Common myeloid progenitor, CD34-positive (primary cell): ENCODE measurements at regions of chr21 and their contacts with region 1.

Region 1: GRCh38 chr21:44792702-44793591 is 8.7 kb downstream of the UBE2G2 start:
- DNase-seq: peak; percentile 64 to 81 (median 80)
- H3K4me3 ChIP-seq: no peak overlapping the region
- H3K27ac ChIP-seq: peak overlapping the region in 1 of 2 experiments; percentile 18
- H3K4me1 ChIP-seq: peaks cover 0 to 9% (median 2%) of the 10 kb centered on the region in 4 experiments
- H3K27me3 ChIP-seq: no peaks in the 10 kb centered on the region

Region 2: GRCh38 chr21:44510508-44511210 is 282.3 kb before region 1 on chr21:
- CTCF ChIA-PET with region 1: interaction called, 36 read pairs
- POLR2A ChIA-PET with region 1: no interaction called
- DNase-seq: peak; percentile 62 to 74 (median 73)
- H3K4me3 ChIP-seq: peak overlapping the region in 6 of 7 experiments; percentile 10 to 79 (median 55)
- H3K27ac ChIP-seq: no peak overlapping the region
- H3K4me1 ChIP-seq: peaks cover 0 to 15% (median 8%) of the 10 kb centered on the region in 4 experiments
- H3K27me3 ChIP-seq: no peaks in the 10 kb centered on the region